Activated CD4-positive, alpha-beta T cell treated with anti-CD3 and anti-CD28 coated beads for 36 hours (primary cell): ENCODE measurements at regions of chr11 and their contacts with region 1.

Region 1: DNA sequence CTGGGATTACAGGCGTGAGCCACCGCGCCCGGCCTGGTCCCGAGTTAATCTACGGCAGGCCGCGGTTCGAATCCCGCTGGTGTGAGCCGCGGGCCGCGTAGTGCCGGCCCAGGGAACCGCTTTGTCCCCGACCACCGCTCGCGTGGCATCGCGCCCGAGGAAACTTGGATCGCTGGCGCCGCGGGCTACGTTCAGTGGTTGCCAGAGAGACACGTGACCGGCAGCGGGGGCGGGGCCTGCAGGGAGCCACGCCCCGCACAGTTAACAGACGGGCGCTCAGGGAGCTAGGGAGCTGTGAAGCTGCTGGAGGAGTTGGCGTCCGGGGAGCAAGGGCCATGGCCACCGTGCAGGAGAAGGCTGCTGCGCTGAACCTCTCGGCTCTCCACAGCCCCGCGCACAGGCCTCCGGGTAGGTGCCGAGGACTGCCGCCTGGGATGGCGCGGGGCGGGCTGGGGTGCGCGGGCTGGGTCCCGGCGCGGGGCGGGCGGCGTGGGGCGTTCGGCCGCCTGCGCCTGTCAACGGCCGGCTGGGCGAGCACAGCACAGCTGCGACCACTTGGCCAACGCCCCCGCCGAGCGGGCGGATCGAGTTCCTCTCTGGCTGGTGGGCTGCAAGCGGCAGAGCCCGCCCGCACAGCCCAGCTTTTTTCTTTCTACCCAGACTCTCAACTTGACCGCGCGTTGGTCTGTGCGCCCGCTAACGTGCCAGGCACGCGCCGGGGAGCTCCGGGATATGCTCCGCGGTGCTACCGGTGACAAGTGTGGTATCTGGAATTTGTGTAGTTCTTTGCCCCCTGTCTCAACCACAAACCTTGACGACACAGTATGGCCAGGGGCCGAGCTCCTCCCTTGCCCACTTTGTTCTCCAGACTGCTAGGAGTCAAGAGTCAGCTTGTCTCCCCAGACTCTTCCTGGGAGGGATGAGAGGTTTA is at the start of gene DEPDC7:
- DNase-seq: peak; percentile 90
- ATAC-seq: peak; percentile 81
- H3K4me3 Mint-ChIP-seq: peak within 1 kb of the TSS; percentile 75
- H3K27ac Mint-ChIP-seq: peak within 1 kb of the TSS; percentile 37
- H3K4me1 Mint-ChIP-seq: peaks cover 43% of the 10 kb centered on the region
- H3K27me3 Mint-ChIP-seq: peaks cover 29% of the 10 kb centered on the region
- total RNA-seq, gene DEPDC7: 2.0 to 2.3 TPM

Region 2: DNA sequence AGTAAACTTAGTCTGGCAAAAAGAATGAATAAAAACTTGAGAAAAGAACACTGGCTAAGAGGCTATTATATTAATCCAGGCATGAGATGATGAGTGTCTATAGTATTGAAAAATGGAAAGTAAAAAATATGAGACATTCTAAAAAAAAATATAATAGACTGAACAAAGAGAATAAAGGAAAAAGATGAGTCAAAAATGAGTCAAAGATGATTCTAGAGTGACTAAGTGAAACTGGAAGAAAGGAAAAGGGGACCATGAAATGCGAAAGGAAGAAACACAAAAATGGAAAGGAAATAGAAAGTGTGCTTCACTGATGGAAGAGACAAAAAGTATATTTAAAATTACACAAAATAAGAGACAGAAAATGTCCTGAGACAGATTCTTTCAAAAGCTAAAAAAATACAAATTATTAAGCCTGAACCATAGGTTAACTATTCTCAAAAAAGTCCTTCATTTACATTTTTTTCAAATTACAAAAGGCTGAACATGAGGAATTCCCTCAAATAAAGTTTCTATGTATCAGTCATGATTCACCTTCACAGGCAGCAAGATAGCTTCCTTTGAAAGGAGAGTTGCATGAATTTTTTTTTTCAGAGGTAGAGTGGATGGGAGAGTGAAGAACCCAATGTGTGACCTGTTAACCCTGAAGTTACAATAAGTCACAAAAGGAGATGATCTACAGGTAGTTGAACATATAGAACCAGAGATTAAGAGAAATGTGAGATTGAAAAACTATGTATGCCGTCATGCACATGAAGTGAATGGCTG is 357.1 kb before region 1 on chr11:
- CTCF ChIA-PET with region 1: no interaction called
- POLR2A ChIA-PET with region 1: no interaction called
- intact Hi-C with region 1: loop called in 1 of 2 experiments (anchors 2 kb)
- DNase-seq: no peak
- ATAC-seq: peak; percentile 77
- H3K4me3 Mint-ChIP-seq: no peak overlapping the region
- H3K27ac Mint-ChIP-seq: no peak overlapping the region
- H3K4me1 Mint-ChIP-seq: peaks cover 18% of the 10 kb centered on the region
- H3K27me3 Mint-ChIP-seq: peaks cover 25% of the 10 kb centered on the region

Region 3: GRCh38 chr11:32821517-32821916 is 194.4 kb before region 1 on chr11:
- CTCF ChIA-PET with region 1: no interaction called
- POLR2A ChIA-PET with region 1: no interaction called
- intact Hi-C with region 1: loop called (anchors 1 to 2 kb)
- DNase-seq: no peak
- ATAC-seq: peak; percentile 66
- H3K4me3 Mint-ChIP-seq: no peak overlapping the region
- H3K27ac Mint-ChIP-seq: no peak overlapping the region
- H3K4me1 Mint-ChIP-seq: peaks cover 24% of the 10 kb centered on the region
- H3K27me3 Mint-ChIP-seq: no peaks in the 10 kb centered on the region

Region 4: GRCh38 chr11:32960553-32961164 is 55.2 kb before region 1 on chr11:
- CTCF ChIA-PET with region 1: interaction called, 4 read pairs
- POLR2A ChIA-PET with region 1: no interaction called
- intact Hi-C with region 1: loop called (anchors 2 to 5 kb)
- DNase-seq: no peak
- ATAC-seq: peak; percentile 36
- H3K4me3 Mint-ChIP-seq: no peak overlapping the region
- H3K27ac Mint-ChIP-seq: no peak overlapping the region
- H3K4me1 Mint-ChIP-seq: peaks cover 11% of the 10 kb centered on the region
- H3K27me3 Mint-ChIP-seq: no peaks in the 10 kb centered on the region

Region 5: DNA sequence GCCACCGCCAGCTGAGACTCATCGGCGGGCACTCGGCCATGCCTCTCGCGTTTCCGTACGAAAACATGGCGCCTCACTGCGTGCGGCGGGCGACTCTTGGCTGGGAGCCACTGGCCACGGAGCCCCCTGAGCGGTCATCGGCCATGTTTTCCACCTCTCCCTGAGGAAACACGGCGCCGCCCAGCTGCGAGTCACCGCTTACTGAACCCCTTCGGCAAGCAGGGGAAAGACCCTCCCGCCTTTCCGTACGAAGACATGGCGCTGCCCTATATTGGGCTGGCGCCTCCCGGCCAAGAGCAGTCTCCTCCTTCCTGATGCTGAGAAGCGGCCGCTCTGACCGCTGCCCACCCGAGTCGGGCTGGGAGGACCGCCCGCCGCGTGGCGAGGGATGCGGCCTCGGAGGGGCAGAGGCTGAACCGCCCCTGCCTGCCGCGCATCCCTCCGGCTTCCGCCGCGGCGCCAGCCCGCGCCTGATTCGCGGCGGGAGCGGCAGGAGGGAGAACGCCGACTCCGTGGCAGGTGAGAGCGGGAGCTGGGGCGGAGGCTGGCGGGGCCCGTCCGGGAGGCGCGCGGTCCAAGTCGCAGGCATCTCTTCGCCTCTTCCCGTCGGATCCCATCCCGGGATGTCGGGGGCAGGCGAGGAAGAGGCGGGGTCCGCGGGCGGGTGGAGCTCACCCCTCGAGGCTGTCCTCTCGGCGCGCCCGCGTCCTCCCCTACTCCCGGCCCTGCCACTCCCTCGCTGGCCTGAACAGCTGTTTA is 23.6 kb after region 1 on chr11 and contains the start of gene TCP11L1:
- CTCF ChIA-PET with region 1: interaction called, 6 read pairs
- POLR2A ChIA-PET with region 1: interaction called, 6 read pairs
- intact Hi-C with region 1: loop called (anchors 1 kb)
- DNase-seq: peak; percentile 89
- ATAC-seq: peak; percentile 71
- H3K4me3 Mint-ChIP-seq: peak within 1 kb of the TSS; percentile 87
- H3K27ac Mint-ChIP-seq: peak within 1 kb of the TSS; percentile 95
- H3K4me1 Mint-ChIP-seq: peaks cover 37% of the 10 kb centered on the region
- H3K27me3 Mint-ChIP-seq: peaks cover 5% of the 10 kb centered on the region
- total RNA-seq, gene TCP11L1: 7.9 to 8.8 TPM